ENCODE measurements at regions of chr4 and their contacts with region 1.

Region 1: DNA sequence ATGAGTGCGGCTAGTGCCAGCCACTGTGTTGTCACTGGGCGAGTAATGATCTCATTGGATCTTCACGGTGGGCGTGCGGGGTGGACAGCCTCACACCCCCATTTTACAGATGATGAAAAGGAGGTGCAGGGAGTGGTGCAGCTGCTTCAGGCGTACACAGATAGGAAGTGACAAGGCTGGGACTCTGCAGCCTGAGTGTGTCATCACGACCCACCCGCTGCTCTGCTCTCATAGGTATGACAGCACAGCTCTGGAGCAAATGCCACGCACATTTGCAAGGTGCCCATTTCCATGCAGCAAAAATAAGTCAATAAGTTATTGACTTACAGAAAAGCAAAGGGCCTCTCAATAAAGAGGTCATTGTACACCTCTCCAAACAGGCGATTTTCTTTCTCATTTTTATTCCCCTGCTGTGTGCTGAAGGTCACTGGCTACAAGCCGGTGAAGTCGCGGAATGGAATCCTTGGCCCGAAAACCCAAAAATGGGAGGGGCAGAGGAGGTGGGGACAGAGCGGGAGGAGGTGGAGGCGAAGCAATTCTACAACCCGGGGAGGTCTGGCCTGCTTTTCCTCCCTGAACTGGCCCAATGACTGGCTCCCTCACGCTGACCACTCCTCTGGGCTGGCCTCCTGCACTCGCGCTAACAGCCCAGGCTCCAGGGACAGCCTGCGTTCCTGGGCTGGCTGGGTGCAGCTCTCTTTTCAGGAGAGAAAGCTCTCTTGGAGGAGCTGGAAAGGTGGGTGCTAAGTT is at the start of gene SOD3:
- DNase-seq: peak; percentile 86
- H3K4me3 ChIP-seq: peak within 1 kb of the TSS; percentile 26 to 28
- H3K27ac ChIP-seq: peak within 1 kb of the TSS; percentile 79
- H3K4me1 ChIP-seq: no peaks in the 10 kb centered on the region
- H3K27me3 ChIP-seq: no peaks in the 10 kb centered on the region
- CTCF ChIP-seq: no peak
- POLR2A ChIP-seq: peak; percentile 42
- total RNA-seq, gene SOD3: 227 to 300 TPM

Region 2: DNA sequence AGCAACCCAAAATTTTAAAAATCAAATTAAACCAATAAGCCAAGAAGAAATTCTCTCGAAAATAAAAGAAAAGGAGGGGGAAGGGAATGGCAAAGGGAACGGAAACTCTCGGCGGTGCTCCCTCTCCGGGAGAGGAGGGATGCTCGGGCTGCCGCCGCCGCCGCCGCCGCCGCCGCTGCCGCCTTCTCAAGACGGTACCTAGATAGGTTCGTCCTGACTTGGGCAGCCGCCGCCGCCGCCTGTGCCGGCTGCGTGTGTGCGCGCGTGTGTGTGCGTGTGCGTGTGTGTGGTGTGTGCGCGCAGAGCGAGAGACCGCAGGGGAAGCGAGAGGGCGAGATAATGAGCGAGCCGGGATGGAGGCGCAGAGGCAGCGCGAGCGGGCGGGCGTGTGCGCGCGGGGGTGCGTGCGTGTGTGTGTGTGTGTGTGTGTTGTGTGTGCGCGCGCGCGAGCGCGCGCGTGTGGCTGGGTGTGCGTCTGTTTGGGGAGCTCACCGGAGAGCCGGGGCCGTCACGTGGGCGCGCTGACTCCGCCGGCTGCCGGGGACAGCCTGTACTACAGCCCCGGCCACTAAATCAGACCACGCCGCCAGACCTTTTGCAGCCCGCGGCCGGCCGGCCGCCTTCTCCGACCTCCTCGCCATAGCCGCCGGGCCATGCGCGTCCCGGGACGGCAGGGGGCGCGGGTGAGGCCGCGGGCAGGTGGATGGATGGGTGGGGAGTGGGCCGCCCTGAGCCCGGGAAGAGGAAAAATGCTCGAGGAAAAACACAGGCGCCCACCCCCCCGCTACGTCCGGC is 322.4 kb before region 1 on chr4:
- intact Hi-C with region 1: loop called (anchors 10 kb)
- DNase-seq: peak; percentile 83
- H3K4me3 ChIP-seq: peak overlapping the region; percentile 43 to 50
- H3K27ac ChIP-seq: peak overlapping the region; percentile 66 to 71
- H3K4me1 ChIP-seq: peaks cover 7% of the 10 kb centered on the region
- H3K27me3 ChIP-seq: no peaks in the 10 kb centered on the region
- CTCF ChIP-seq: peak; percentile 19 to 75 (median 52)
- POLR2A ChIP-seq: no peak

Region 3: DNA sequence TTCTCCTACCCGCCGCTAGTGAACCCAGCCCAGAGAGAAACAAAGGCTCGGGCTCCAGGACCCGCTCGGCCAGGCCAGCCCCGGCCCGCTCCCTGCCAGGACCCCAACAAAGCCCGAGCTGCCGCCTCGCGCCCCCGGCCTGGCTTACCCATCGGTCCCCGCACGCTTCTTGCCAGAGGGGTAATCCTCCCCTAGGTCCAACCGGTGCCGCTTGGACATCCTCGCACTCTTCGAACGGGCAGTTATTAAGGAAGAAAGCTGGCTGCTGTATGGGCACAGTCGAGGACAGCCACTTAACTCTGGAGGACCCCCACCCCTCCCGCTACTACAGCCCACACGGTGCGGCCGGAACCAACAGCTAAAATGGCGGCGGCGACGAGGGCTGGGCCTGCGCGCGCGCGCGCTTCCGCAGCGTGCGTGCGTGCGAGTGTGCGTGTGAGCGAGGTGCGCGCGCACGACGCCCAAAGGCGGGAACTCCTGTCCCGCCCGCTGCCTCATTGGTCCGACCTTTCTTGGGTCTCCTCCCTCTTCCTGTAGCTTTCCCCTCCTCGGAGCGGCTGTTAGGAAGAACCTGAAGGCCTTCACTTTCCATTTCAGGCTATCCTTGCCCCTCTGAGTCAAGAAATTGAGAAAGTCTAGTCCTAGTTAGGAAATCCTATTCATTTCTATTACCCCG is 210.8 kb before region 1 on chr4 and contains the start of gene DHX15:
- intact Hi-C with region 1: loop called (anchors 5 kb)
- DNase-seq: peak; percentile 96
- H3K4me3 ChIP-seq: peak within 1 kb of the TSS; percentile 98 to 99
- H3K27ac ChIP-seq: peak within 1 kb of the TSS; percentile 96 to 97
- H3K4me1 ChIP-seq: no peaks in the 10 kb centered on the region
- H3K27me3 ChIP-seq: no peaks in the 10 kb centered on the region
- CTCF ChIP-seq: peak in 1 of 4 experiments; percentile 9
- POLR2A ChIP-seq: peak; percentile 69
- total RNA-seq, gene DHX15: 86.1 to 109 TPM

Region 4: GRCh38 chr4:24730256-24731001 is 64.7 kb before region 1 on chr4:
- intact Hi-C with region 1: loop called (anchors 5 kb)
- DNase-seq: no peak
- H3K4me3 ChIP-seq: no peak overlapping the region
- H3K27ac ChIP-seq: no peak overlapping the region
- H3K4me1 ChIP-seq: no peaks in the 10 kb centered on the region
- H3K27me3 ChIP-seq: no peaks in the 10 kb centered on the region
- CTCF ChIP-seq: no peak
- POLR2A ChIP-seq: no peak

Region 5: GRCh38 chr4:24850674-24851073 is 55.6 kb after region 1 on chr4:
- intact Hi-C with region 1: loop called (anchors 5 kb)
- DNase-seq: no peak
- H3K4me3 ChIP-seq: no peak overlapping the region
- H3K27ac ChIP-seq: no peak overlapping the region
- H3K4me1 ChIP-seq: no peaks in the 10 kb centered on the region
- H3K27me3 ChIP-seq: no peaks in the 10 kb centered on the region
- CTCF ChIP-seq: no peak
- POLR2A ChIP-seq: no peak

Region 6: GRCh38 chr4:24896977-24897376 is 101.9 kb after region 1 on chr4:
- intact Hi-C with region 1: no loop called
- DNase-seq: no peak
- H3K4me3 ChIP-seq: no peak overlapping the region
- H3K27ac ChIP-seq: no peak overlapping the region
- H3K4me1 ChIP-seq: no peaks in the 10 kb centered on the region
- H3K27me3 ChIP-seq: no peaks in the 10 kb centered on the region
- CTCF ChIP-seq: no peak
- POLR2A ChIP-seq: no peak

Region 7: GRCh38 chr4:24912252-24913118 is 117.4 kb after region 1 on chr4 and contains the start of gene CCDC149:
- intact Hi-C with region 1: loop called (anchors 5 kb)
- DNase-seq: peak; percentile 88
- H3K4me3 ChIP-seq: peak within 1 kb of the TSS; percentile 65 to 67
- H3K27ac ChIP-seq: peak within 1 kb of the TSS; percentile 90 to 94
- H3K4me1 ChIP-seq: no peaks in the 10 kb centered on the region
- H3K27me3 ChIP-seq: no peaks in the 10 kb centered on the region
- CTCF ChIP-seq: peak in 2 of 4 experiments; percentile 31 to 32
- POLR2A ChIP-seq: peak; percentile 84
- total RNA-seq, gene CCDC149: 14.0 to 19.6 TPM

Measured in prostate gland (tissue), 2 donors.